ENCODE measurements at regions of chr1 and their contacts with region 1.

Region 1: DNA sequence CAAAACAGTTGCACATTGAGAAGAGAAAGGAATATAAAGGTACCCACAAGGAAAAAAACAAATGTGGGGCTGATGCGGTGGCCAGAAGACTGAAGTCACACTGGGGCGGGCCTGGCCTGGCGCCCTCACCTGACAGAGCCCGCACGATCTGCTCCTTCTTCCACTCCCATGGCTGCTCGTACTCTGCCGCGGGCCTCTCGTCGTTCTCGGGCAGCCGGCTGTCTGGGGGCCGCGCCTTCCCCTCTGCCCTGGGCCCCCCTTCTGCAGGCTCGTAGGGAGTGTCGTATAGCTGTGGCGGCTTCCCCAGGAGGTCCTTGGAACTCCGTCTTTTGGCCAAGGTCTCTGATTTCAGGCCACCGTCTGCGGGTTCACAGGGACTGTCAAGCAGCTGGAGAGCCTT is 13.1 kb upstream of the TDRD10 start:
- DNase-seq: no peak
- H3K4me3 ChIP-seq: no peak overlapping the region
- H3K27ac ChIP-seq: no peak overlapping the region
- H3K4me1 ChIP-seq: no peaks in the 10 kb centered on the region
- H3K27me3 ChIP-seq: peaks cover 81% of the 10 kb centered on the region
- CTCF ChIP-seq: no peak

Region 2: DNA sequence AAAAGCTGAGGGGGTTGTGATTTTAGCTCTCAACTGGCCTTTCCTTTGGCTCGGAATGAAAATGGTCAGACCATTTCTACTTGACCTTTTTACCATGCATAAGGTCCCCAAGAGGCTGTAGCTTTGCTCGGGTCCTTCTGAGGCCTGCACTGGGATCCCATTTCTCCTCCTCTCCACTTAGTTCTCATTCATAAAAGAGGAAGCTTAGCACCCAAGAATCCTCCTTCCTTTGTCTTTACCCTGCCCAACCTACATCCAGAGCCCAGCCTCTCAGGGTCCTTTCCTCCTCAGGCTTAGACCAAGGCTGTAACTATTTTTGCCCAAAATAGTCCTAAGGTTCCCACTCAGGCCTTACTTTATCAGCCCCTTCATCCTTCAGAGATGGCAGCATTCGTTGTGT is 719.7 kb before region 1 on chr1:
- CTCF ChIA-PET with region 1: interaction called, 13 read pairs
- POLR2A ChIA-PET with region 1: no interaction called
- intact Hi-C with region 1: no loop called
- DNase-seq: no peak
- H3K4me3 ChIP-seq: no peak overlapping the region
- H3K27ac ChIP-seq: no peak overlapping the region
- H3K4me1 ChIP-seq: no peaks in the 10 kb centered on the region
- H3K27me3 ChIP-seq: no peaks in the 10 kb centered on the region
- CTCF ChIP-seq: no peak

Region 3: GRCh38 chr1:154081386-154082126 is 407.4 kb before region 1 on chr1:
- CTCF ChIA-PET with region 1: interaction called, 12 read pairs
- POLR2A ChIA-PET with region 1: no interaction called
- intact Hi-C with region 1: no loop called
- DNase-seq: no peak
- H3K4me3 ChIP-seq: no peak overlapping the region
- H3K27ac ChIP-seq: no peak overlapping the region
- H3K4me1 ChIP-seq: no peaks in the 10 kb centered on the region
- H3K27me3 ChIP-seq: no peaks in the 10 kb centered on the region
- CTCF ChIP-seq: no peak

Measured in PC-9 (cell line).